ENCODE measurements at regions of chr1 and their contacts with region 1.

Region 1: GRCh38 chr1:46718727-46719622 is at the start of gene EFCAB14:
- DNase-seq: peak; percentile 100
- ATAC-seq: peak; percentile 99
- H3K4me3 Mint-ChIP-seq: peak within 1 kb of the TSS; percentile 89
- H3K27ac Mint-ChIP-seq: peak within 1 kb of the TSS; percentile 88
- H3K4me1 Mint-ChIP-seq: peaks cover 37% of the 10 kb centered on the region
- H3K27me3 Mint-ChIP-seq: peaks cover 2% of the 10 kb centered on the region
- CTCF ChIP-seq: no peak
- total RNA-seq, gene EFCAB14: 70.2 and 79.8 TPM in 2 replicates

Region 2: DNA sequence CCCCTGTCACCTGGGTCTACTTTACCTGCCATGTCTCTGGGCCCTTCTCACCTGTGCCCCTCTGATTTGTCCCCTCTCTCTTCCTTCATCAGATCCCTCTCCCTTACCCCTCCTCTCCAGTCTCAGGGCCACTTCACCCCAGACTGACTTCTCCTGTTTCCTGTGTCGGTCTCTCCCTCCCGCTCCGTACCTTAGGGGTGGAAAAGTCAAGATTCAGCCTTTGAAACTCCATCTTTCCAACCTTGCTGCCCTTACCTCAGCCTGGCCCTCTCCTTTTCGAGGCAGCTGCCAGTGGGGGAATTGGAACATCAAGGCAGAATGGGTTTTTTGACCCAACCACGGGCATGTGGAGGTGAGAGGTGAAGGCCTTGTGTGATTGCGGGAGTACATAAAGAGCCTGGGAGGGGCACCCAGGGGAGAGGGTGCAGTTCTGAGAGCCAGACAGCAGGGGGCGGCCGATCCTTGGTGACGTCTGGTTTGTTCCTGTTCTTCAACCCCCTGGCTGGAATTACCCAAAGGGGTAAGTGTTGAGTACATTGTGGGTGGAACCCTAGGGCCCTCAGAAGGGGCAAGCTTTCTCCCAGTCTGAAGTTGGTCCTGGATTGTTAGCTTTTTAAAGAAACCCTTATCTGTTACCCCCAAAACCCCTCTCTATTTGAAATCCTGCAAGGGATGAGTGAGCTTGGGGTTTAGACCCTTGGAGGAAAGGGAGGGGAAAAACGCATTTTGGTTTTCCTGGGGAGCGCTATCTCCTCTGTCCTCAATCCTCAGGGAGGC is 241.6 kb before region 1 on chr1:
- CTCF ChIA-PET with region 1: no interaction called
- POLR2A ChIA-PET with region 1: no interaction called
- intact Hi-C with region 1: no loop called
- DNase-seq: peak; percentile 67
- ATAC-seq: peak; percentile 96
- H3K4me3 Mint-ChIP-seq: no peak overlapping the region
- H3K27ac Mint-ChIP-seq: no peak overlapping the region
- H3K4me1 Mint-ChIP-seq: peaks cover 40% of the 10 kb centered on the region
- H3K27me3 Mint-ChIP-seq: peaks cover 18% of the 10 kb centered on the region
- CTCF ChIP-seq: peak; percentile 71

Region 3: GRCh38 chr1:46603858-46604549 is 115.0 kb before region 1 on chr1 and contains the start of gene MKNK1:
- CTCF ChIA-PET with region 1: interaction called, 11 read pairs
- POLR2A ChIA-PET with region 1: interaction called, 5 read pairs
- intact Hi-C with region 1: loop called (anchors 1 kb)
- DNase-seq: peak; percentile 97
- ATAC-seq: peak; percentile 99
- H3K4me3 Mint-ChIP-seq: peak within 1 kb of the TSS; percentile 95
- H3K27ac Mint-ChIP-seq: peak within 1 kb of the TSS; percentile 86
- H3K4me1 Mint-ChIP-seq: peaks cover 17% of the 10 kb centered on the region
- H3K27me3 Mint-ChIP-seq: no peaks in the 10 kb centered on the region
- CTCF ChIP-seq: no peak
- total RNA-seq, gene MKNK1: 42.3 and 45.0 TPM in 2 replicates

Region 4: GRCh38 chr1:46616277-46617107 is 102.5 kb before region 1 on chr1 and contains the start of gene MOB3C:
- CTCF ChIA-PET with region 1: no interaction called
- POLR2A ChIA-PET with region 1: interaction called, 5 read pairs
- intact Hi-C with region 1: loop called (anchors 1 kb)
- DNase-seq: peak; percentile 62
- ATAC-seq: peak; percentile 89
- H3K4me3 Mint-ChIP-seq: peak within 1 kb of the TSS; percentile 92
- H3K27ac Mint-ChIP-seq: peak within 1 kb of the TSS; percentile 87
- H3K4me1 Mint-ChIP-seq: peaks cover 64% of the 10 kb centered on the region
- H3K27me3 Mint-ChIP-seq: no peaks in the 10 kb centered on the region
- CTCF ChIP-seq: no peak
- total RNA-seq, gene MOB3C: 9.7 and 10.7 TPM in 2 replicates

Region 5: GRCh38 chr1:46667782-46668760 is 50.9 kb before region 1 on chr1 and contains the start of gene ATPAF1:
- CTCF ChIA-PET with region 1: no interaction called
- POLR2A ChIA-PET with region 1: interaction called, 8 read pairs
- intact Hi-C with region 1: loop called (anchors 2 kb)
- DNase-seq: peak; percentile 55
- ATAC-seq: peak; percentile 91
- H3K4me3 Mint-ChIP-seq: peak within 1 kb of the TSS; percentile 80
- H3K27ac Mint-ChIP-seq: no peak within 1 kb of the TSS
- H3K4me1 Mint-ChIP-seq: peaks cover 16% of the 10 kb centered on the region
- H3K27me3 Mint-ChIP-seq: no peaks in the 10 kb centered on the region
- CTCF ChIP-seq: no peak
- total RNA-seq, gene ATPAF1: 21.2 and 24.5 TPM in 2 replicates

Region 6: GRCh38 chr1:47333922-47334764 is 615.2 kb after region 1 on chr1:
- CTCF ChIA-PET with region 1: no interaction called
- POLR2A ChIA-PET with region 1: no interaction called
- intact Hi-C with region 1: loop called (anchors 10 kb)
- DNase-seq: peak; percentile 78
- ATAC-seq: peak; percentile 86
- H3K4me3 Mint-ChIP-seq: no peak overlapping the region
- H3K27ac Mint-ChIP-seq: peak overlapping the region; percentile 92
- H3K4me1 Mint-ChIP-seq: peaks cover 19% of the 10 kb centered on the region
- H3K27me3 Mint-ChIP-seq: no peaks in the 10 kb centered on the region
- CTCF ChIP-seq: no peak